ENCODE measurements at regions of chr13 and their contacts with region 1.

Region 1: GRCh38 chr13:29935309-29935981 is 85.0 kb upstream of the UBL3 start:
- DNase-seq: peak; percentile 93
- ATAC-seq: peak; percentile 95
- H3K4me3 Mint-ChIP-seq: peak overlapping the region; percentile 68
- H3K27ac Mint-ChIP-seq: peak overlapping the region; percentile 88
- H3K4me1 Mint-ChIP-seq: peaks cover 54% of the 10 kb centered on the region
- H3K27me3 Mint-ChIP-seq: no peaks in the 10 kb centered on the region

Region 2: DNA sequence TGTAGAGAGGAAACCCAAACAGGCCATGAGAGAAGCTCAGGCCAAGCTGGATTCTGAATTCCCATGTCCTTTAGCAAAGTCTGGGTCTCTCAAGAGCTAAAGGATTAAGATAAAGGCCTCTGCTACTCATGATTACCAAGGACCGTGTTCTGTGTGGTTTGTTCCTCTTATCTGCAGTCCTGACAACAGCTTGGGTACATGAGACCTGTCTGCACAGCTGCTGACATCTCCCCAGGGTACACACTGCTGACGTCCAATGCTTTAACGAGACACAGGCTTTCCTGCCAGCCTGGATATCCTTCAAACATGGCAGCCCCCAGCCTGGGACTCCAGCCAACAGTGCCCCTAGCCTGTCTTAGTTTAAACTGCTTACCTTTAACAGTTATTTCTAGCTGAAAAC is 551.0 kb before region 1 on chr13:
- CTCF ChIA-PET with region 1: no interaction called
- POLR2A ChIA-PET with region 1: no interaction called
- intact Hi-C with region 1: no loop called
- DNase-seq: no peak
- ATAC-seq: no peak
- H3K4me3 Mint-ChIP-seq: no peak overlapping the region
- H3K27ac Mint-ChIP-seq: no peak overlapping the region
- H3K4me1 Mint-ChIP-seq: no peaks in the 10 kb centered on the region
- H3K27me3 Mint-ChIP-seq: peaks cover 5% of the 10 kb centered on the region

Region 3: DNA sequence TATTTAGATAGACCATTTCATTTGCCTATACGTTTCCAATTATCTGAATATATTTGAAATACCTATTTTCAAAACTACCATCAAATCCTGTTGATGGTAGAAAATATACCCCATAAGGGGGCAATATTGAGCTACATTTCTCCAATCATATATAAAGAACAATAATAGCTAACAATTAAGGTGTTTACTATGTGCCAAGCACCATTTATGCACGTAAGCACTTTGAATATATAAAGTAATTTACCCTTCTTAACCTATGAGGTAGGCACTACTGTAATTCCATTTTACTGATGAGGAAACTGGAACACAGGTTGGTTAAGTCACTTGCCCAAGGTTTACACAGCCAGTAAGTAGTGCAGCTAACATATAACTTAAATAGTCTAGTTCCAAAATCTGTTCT is 164.2 kb before region 1 on chr13:
- CTCF ChIA-PET with region 1: interaction called, 7 read pairs
- POLR2A ChIA-PET with region 1: no interaction called
- intact Hi-C with region 1: loop called in 1 of 2 experiments (anchors 5 kb)
- DNase-seq: no peak
- ATAC-seq: no peak
- H3K4me3 Mint-ChIP-seq: no peak overlapping the region
- H3K27ac Mint-ChIP-seq: no peak overlapping the region
- H3K4me1 Mint-ChIP-seq: peaks cover 8% of the 10 kb centered on the region
- H3K27me3 Mint-ChIP-seq: no peaks in the 10 kb centered on the region

Region 4: DNA sequence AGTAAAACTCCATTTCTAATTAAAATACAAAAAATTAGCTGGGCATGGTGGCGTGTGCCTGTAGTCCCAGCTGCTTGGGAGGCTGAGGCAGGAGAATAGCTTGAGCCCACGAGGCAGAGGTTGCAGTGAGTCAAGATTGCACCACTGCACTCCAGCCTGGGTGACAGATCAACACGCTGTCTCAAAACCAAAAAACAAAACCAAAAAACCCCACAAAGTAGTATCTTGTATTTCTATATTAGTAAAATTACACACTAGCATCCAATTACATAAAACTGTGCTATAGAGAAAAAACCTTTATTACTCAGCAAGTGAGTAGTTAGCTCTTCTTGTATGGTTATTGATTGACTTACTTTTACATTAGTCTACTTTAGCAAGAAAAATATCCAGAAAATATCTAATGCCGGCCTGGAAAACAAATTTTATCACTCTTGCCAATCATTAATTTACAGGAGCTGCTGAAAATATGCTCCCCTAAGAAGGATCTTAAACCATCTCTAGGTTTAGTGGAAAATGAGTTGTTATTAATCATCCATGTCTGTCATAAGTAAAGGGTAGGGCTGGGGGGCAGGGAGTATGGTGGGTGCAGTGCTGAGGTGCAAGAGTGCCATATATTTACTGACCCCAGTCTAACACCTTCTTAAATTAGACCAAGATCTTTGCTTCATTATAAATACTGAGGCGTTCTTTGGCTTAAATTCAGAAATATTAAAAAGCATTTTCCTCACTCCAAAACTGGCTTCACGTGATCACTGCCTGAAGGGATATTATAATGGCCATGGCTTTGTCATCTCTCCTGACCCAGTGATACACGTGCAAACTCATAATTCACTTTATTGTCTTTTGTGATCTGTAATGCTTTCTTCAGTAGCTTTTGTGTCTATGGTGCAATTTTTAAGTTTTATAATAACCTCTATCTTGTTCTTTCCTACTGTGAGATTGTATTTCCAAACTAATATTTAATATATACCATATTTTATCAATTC is 129.2 kb before region 1 on chr13:
- CTCF ChIA-PET with region 1: no interaction called
- POLR2A ChIA-PET with region 1: no interaction called
- intact Hi-C with region 1: loop called in 1 of 2 experiments (anchors 1 kb)
- DNase-seq: peak; percentile 61
- ATAC-seq: peak; percentile 90
- H3K4me3 Mint-ChIP-seq: no peak overlapping the region
- H3K27ac Mint-ChIP-seq: no peak overlapping the region
- H3K4me1 Mint-ChIP-seq: peaks cover 37% of the 10 kb centered on the region
- H3K27me3 Mint-ChIP-seq: no peaks in the 10 kb centered on the region

Region 5: GRCh38 chr13:29923554-29924481 is 11.6 kb before region 1 on chr13:
- CTCF ChIA-PET with region 1: interaction called, 63 read pairs
- POLR2A ChIA-PET with region 1: no interaction called
- intact Hi-C with region 1: loop called in 1 of 2 experiments (anchors 1 kb)
- DNase-seq: peak; percentile 88
- ATAC-seq: peak; percentile 97
- H3K4me3 Mint-ChIP-seq: no peak overlapping the region
- H3K27ac Mint-ChIP-seq: no peak overlapping the region
- H3K4me1 Mint-ChIP-seq: peaks cover 41% of the 10 kb centered on the region
- H3K27me3 Mint-ChIP-seq: no peaks in the 10 kb centered on the region

Region 6: GRCh38 chr13:30114571-30115256 is 179.3 kb after region 1 on chr13:
- CTCF ChIA-PET with region 1: interaction called, 13 read pairs
- POLR2A ChIA-PET with region 1: interaction called, 3 read pairs
- intact Hi-C with region 1: loop called (anchors 1 to 2 kb)
- DNase-seq: peak; percentile 96
- ATAC-seq: peak; percentile 92
- H3K4me3 Mint-ChIP-seq: peak overlapping the region; percentile 70
- H3K27ac Mint-ChIP-seq: peak overlapping the region; percentile 68
- H3K4me1 Mint-ChIP-seq: peaks cover 33% of the 10 kb centered on the region
- H3K27me3 Mint-ChIP-seq: no peaks in the 10 kb centered on the region

Region 7: GRCh38 chr13:30776661-30777060 is 841.2 kb after region 1 on chr13:
- CTCF ChIA-PET with region 1: no interaction called
- POLR2A ChIA-PET with region 1: no interaction called
- intact Hi-C with region 1: no loop called
- DNase-seq: no peak
- ATAC-seq: no peak
- H3K4me3 Mint-ChIP-seq: no peak overlapping the region
- H3K27ac Mint-ChIP-seq: no peak overlapping the region
- H3K4me1 Mint-ChIP-seq: peaks cover 20% of the 10 kb centered on the region
- H3K27me3 Mint-ChIP-seq: peaks cover 5% of the 10 kb centered on the region

Measured in activated CD4-positive, alpha-beta T cell treated with anti-CD3 and anti-CD28 coated beads for 36 hours (primary cell).